Heart left ventricle (tissue), 16 donors: ENCODE measurements at regions of chr18 and their contacts with region 1.

Region 1: DNA sequence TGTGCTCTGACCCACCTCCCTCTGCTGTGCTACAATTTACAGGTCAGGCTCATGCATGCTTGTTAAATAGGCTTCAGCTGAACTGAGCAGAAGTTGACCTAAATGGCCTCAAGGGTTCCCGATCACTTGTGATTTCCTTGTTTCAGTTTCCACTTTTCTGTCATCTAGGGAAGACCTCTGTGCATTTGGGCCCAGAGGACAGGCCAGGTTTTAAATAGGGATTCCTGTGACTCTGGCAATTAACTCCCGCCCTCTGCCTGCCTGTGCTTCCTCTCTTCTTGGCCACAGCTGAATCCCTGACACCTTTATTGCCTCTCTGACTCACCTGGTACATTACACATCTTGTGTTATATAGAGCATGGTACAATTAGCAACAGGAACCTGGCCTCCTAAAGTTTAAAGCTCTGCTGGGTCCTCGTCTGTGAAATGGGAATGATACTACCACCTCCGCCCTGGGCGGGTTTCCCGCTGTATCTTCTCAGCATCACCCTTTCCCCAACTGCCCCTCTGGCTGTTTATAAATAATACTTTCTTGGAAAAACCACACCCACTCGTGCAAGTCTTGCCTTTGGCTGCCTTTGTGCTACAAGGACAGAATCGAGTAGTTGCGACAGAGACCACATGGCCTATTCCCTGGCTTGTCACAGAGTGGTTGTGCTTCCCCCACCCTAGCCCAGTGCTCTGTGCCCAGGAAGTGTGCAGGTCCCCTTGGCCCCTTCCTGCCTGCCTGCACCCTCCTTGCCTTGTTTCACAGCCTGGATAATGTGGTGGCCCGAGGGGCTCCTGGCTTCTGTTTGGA is 7.9 kb downstream of the CABLES1 start:
- DNase-seq: peak in 1 of 5 donors; percentile 62
- ATAC-seq: peak in 3 of 4 donors; percentile 38 to 57 (median 44)
- H3K4me3 ChIP-seq: no peak overlapping the region
- H3K27ac ChIP-seq: peak overlapping the region in 5 of 12 donors; percentile 8 to 60 (median 34)
- H3K4me1 ChIP-seq: peaks cover 0 to 61% (median 24%) of the 10 kb centered on the region in 12 donors
- H3K27me3 ChIP-seq: peaks cover 0 to 5% (median 0%) of the 10 kb centered on the region in 9 donors
- CTCF ChIP-seq: no peak
- POLR2A ChIP-seq: no peak

Region 2: DNA sequence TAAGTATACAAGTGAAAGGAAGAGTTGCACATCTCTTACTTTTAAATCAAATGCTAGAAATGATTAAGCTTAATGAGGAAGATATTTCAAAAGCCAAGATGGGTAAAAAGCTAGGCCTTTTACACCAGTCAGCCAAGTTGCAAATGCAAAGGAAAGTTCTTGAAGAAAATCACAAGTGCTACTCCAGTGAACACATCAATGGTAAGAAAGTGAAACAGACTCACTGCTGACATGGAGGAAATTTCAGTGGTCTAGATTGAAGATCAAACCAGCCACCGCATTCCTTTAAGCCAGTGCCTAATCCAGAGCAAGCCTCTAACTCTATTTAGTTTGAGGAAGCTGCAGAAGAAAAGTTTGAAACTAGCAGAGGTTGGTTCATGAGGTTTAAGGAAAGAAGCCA is 131.0 kb before region 1 on chr18:
- intact Hi-C with region 1: no loop called
- DNase-seq: no peak
- ATAC-seq: no peak
- H3K4me3 ChIP-seq: no peak overlapping the region
- H3K27ac ChIP-seq: no peak overlapping the region
- H3K4me1 ChIP-seq: no peaks in the 10 kb centered on the region
- H3K27me3 ChIP-seq: no peaks in the 10 kb centered on the region
- CTCF ChIP-seq: no peak
- POLR2A ChIP-seq: no peak

Region 3: DNA sequence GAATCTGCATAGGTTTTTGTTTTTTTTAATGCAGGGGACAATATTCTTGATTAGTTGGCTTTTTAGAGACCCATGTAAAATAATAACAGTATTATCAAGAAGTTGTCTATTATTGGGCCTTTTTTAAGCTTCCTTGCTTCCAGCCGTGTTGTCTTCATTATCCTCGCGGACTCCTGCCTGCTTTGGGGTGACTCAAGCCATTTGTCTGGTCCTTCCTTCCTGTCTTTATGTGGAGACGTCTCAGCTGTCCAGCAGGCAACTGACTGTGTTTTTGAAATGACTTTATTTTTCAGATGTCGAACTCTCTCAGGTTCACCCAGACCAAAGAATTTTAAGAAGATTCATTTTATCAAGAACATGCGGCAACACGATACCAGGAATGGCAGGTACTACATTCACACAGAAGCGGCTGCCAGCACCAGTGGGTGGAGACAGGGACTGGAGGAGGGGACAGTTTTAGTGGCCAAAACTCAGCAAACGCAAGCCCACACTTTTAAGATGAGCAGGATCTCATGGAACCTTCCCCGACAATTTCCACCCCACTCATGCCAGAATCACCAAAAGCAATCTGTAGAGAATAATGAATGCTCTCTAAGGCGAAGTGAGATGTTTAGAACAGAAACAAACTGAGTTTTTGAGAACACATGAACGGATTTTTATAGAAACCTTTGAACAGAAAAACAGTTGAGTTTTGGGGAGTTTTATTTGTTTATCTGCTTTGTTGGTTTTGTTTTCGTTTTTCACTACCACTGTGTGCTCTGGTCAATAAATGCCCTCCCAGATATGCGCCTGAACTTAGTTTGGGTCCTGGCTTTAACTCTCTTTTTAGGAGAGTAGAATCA is 51.2 kb after region 1 on chr18:
- intact Hi-C with region 1: loop called in 5 of 10 experiments (anchors 5 to 10 kb)
- DNase-seq: no peak
- ATAC-seq: peak in 2 of 4 donors; percentile 30 to 76
- H3K4me3 ChIP-seq: peak overlapping the region in 2 of 12 donors; percentile 10 to 12
- H3K27ac ChIP-seq: peak overlapping the region in 10 of 12 donors; percentile 11 to 66 (median 46)
- H3K4me1 ChIP-seq: peaks cover 0 to 33% (median 12%) of the 10 kb centered on the region in 12 donors
- H3K27me3 ChIP-seq: no peaks in the 10 kb centered on the region
- CTCF ChIP-seq: no peak
- POLR2A ChIP-seq: no peak

Region 4: DNA sequence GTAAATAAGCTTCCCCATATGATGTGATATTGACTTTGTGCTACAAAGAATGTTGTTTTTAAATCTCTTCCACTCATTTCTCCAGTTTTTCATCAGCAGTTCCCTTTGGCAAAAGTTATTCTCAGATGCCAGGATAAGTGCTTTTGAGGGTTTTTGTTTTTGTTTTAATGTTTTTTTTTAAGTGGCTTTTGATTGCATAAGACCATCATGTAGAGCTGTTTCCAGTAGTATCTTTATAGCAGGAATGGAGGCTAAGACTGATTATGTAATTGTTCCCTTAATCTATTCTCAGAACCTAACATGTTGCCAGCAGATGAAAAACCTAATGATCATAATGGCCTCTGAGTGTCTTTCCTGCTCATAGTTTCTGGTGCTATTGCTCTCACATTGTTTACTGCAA is 70.0 kb after region 1 on chr18:
- intact Hi-C with region 1: loop called in 1 of 10 experiments (anchors 10 kb)
- DNase-seq: no peak
- ATAC-seq: no peak
- H3K4me3 ChIP-seq: no peak overlapping the region
- H3K27ac ChIP-seq: no peak overlapping the region
- H3K4me1 ChIP-seq: peaks cover 0 to 18% (median 0%) of the 10 kb centered on the region in 12 donors
- H3K27me3 ChIP-seq: no peaks in the 10 kb centered on the region
- CTCF ChIP-seq: no peak
- POLR2A ChIP-seq: no peak